HepG2 (cell line): ENCODE measurements at regions of chr6 and their contacts with region 1.

Region 1: GRCh38 chr6:85482905-85483700 is 33.2 kb downstream of the NT5E start:
- DNase-seq: peak; percentile 50
- ATAC-seq: peak; percentile 94
- H3K4me3 ChIP-seq: no peak overlapping the region; a peak in 1 of 6 replicates
- H3K27ac ChIP-seq: no peak overlapping the region
- H3K4me1 ChIP-seq: peaks cover 7% of the 10 kb centered on the region; the same call in 1 of the 2 replicates
- H3K27me3 ChIP-seq: no peaks in the 10 kb centered on the region
- CTCF ChIP-seq: peak; percentile 94
- EP300 ChIP-seq: no peak
- POLR2A ChIP-seq: no peak
- RAD21 ChIP-seq: peak; percentile 92

Region 2: GRCh38 chr6:85449818-85450759 is 33.0 kb before region 1 on chr6 and contains the start of gene NT5E:
- CTCF ChIA-PET with region 1: no interaction called
- POLR2A ChIA-PET with region 1: interaction called, 8 read pairs
- in situ Hi-C with region 1: no loop called
- intact Hi-C with region 1: loop called (anchors 1 kb)
- DNase-seq: peak; percentile 24
- ATAC-seq: peak; percentile 79
- H3K4me3 ChIP-seq: peak within 1 kb of the TSS; percentile 76 to 88 (median 79)
- H3K27ac ChIP-seq: peak within 1 kb of the TSS; percentile 84
- H3K4me1 ChIP-seq: peaks cover 69% of the 10 kb centered on the region
- H3K27me3 ChIP-seq: no peaks in the 10 kb centered on the region; a peak in 1 of 5 replicates
- CTCF ChIP-seq: peak; percentile 38; the same call in 1 of the 2 replicates
- EP300 ChIP-seq: 0 out of 4 replicates have a peak, but pooled peaks of 1 of the 2 experiments have one; percentile 11
- POLR2A ChIP-seq: peak; percentile 49 to 83; a peak in 3 of 4 replicates
- RAD21 ChIP-seq: 0 out of 2 replicates have a peak, but pooled peaks have one; percentile 20
- total RNA-seq, gene NT5E: 6.4 and 9.5 TPM in 2 replicates